ENCODE measurements at regions of chr3 and their contacts with region 1.

Region 1: DNA sequence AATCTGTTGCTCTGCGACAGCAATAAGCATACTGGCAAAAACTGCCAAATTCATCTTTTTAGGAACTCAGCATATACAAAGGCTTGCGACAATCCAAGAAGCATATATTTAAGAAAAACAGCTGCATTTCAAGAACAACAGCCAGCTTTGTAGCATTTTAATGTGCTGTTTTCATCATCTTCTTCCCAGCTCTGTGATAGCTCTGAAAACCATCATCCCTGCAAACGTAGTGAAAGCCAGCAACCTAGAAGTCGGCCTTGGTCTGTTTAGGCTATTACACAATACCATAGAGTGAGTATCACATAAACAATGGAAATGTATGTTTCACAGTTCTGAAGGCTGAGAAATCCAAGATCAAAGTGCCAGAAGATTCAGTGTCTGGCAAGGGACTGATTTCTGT is 187.5 kb downstream of the NAALADL2 start:
- DNase-seq: no peak
- H3K4me3 ChIP-seq: no peak overlapping the region
- H3K27ac ChIP-seq: no peak overlapping the region
- H3K4me1 ChIP-seq: no peaks in the 10 kb centered on the region
- H3K27me3 ChIP-seq: no peaks in the 10 kb centered on the region
- CTCF ChIP-seq: no peak
- POLR2A ChIP-seq: no peak

Region 2: GRCh38 chr3:174062923-174063322 is 983.7 kb before region 1 on chr3:
- intact Hi-C with region 1: no loop called
- DNase-seq: no peak
- H3K4me3 ChIP-seq: no peak overlapping the region
- H3K27ac ChIP-seq: no peak overlapping the region
- H3K4me1 ChIP-seq: no peaks in the 10 kb centered on the region
- H3K27me3 ChIP-seq: no peaks in the 10 kb centered on the region
- CTCF ChIP-seq: no peak
- POLR2A ChIP-seq: no peak

Region 3: DNA sequence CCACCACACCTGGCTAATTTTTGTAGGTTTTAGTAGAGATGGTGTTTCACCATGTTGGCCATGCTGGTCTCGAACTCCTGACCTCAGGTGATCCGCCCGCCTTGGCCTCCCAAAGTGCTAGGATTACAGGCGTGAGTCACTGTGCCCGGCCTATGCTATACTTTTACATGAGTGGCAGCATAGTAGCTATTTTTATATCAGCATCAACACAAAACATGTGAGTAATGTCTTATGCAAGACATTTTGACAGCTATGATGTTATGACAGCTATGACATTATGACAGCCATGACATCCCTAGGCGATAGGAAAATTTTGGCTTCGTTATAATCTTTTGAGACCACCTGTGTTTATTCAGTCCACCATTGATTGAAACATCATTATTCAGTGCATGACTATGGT is 191.6 kb before region 1 on chr3:
- intact Hi-C with region 1: no loop called
- DNase-seq: no peak
- H3K4me3 ChIP-seq: no peak overlapping the region
- H3K27ac ChIP-seq: no peak overlapping the region
- H3K4me1 ChIP-seq: no peaks in the 10 kb centered on the region
- H3K27me3 ChIP-seq: no peaks in the 10 kb centered on the region
- CTCF ChIP-seq: no peak
- POLR2A ChIP-seq: no peak

Region 4: DNA sequence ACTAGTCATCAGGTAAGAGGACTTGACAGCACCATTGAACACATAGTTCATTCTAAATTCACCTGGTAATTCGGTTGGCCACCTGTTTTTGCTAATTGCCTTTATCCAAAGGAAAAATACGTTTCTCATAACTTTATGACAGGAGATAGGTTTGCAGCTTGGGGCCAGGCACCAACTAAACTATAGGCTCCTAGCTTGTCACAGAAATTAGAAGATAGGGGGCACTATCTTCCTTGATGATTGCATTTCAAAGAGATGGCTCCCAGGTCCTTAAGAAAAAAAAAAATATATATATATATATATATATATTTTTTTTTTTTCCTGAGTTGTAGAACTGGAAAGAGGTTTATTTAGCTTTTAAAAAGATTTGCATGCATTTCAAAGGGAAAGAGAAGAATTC is 376.1 kb after region 1 on chr3:
- intact Hi-C with region 1: loop called (anchors 10 kb)
- DNase-seq: no peak
- H3K4me3 ChIP-seq: no peak overlapping the region
- H3K27ac ChIP-seq: no peak overlapping the region
- H3K4me1 ChIP-seq: no peaks in the 10 kb centered on the region
- H3K27me3 ChIP-seq: no peaks in the 10 kb centered on the region
- CTCF ChIP-seq: no peak
- POLR2A ChIP-seq: no peak

Measured in vagina (tissue), 2 donors.